H1 (cell line): ENCODE measurements at regions of chr1 and their contacts with region 1.

Region 1: GRCh38 chr1:5481889-5482288 is 510.3 kb downstream of the NPHP4 start:
- DNase-seq: peak; percentile 33 to 69
- H3K4me3 ChIP-seq: no peak overlapping the region
- H3K27ac ChIP-seq: no peak overlapping the region
- H3K4me1 ChIP-seq: no peaks in the 10 kb centered on the region; a peak in 1 of 7 replicates
- H3K27me3 ChIP-seq: peaks cover 0 to 5% (median 0%) of the 10 kb centered on the region in 4 experiments; a peak in 4 of 7 replicates
- CTCF ChIP-seq: peak; percentile 62 to 92 (median 88)
- EP300 ChIP-seq: no peak
- POLR2A ChIP-seq: no peak
- RAD21 ChIP-seq: peak; percentile 73 to 77

Region 2: GRCh38 chr1:5436808-5437207 is 45.1 kb before region 1 on chr1:
- CTCF ChIA-PET with region 1: no interaction called
- POLR2A ChIA-PET with region 1: no interaction called
- DNase-seq: no peak
- H3K4me3 ChIP-seq: no peak overlapping the region
- H3K27ac ChIP-seq: no peak overlapping the region
- H3K4me1 ChIP-seq: no peaks in the 10 kb centered on the region
- H3K27me3 ChIP-seq: no peaks in the 10 kb centered on the region
- CTCF ChIP-seq: no peak
- EP300 ChIP-seq: no peak
- POLR2A ChIP-seq: no peak
- RAD21 ChIP-seq: no peak

Region 3: GRCh38 chr1:5504354-5504720 is 22.4 kb after region 1 on chr1:
- CTCF ChIA-PET with region 1: interaction called, 11 read pairs
- POLR2A ChIA-PET with region 1: no interaction called
- DNase-seq: no peak
- H3K4me3 ChIP-seq: no peak overlapping the region
- H3K27ac ChIP-seq: no peak overlapping the region
- H3K4me1 ChIP-seq: no peaks in the 10 kb centered on the region; a peak in 2 of 7 replicates
- H3K27me3 ChIP-seq: no peaks in the 10 kb centered on the region; a peak in 2 of 7 replicates
- CTCF ChIP-seq: no peak
- EP300 ChIP-seq: no peak
- POLR2A ChIP-seq: no peak
- RAD21 ChIP-seq: no peak

Region 4: GRCh38 chr1:5682626-5683225 is 200.8 kb after region 1 on chr1:
- CTCF ChIA-PET with region 1: no interaction called
- POLR2A ChIA-PET with region 1: no interaction called
- DNase-seq: no peak
- H3K4me3 ChIP-seq: no peak overlapping the region
- H3K27ac ChIP-seq: no peak overlapping the region
- H3K4me1 ChIP-seq: no peaks in the 10 kb centered on the region
- H3K27me3 ChIP-seq: peaks cover 0 to 2% (median 0%) of the 10 kb centered on the region in 4 experiments; a peak in 2 of 7 replicates
- CTCF ChIP-seq: no peak
- EP300 ChIP-seq: no peak
- POLR2A ChIP-seq: no peak
- RAD21 ChIP-seq: no peak